Activated naive CD4-positive, alpha-beta T cell treated with anti-CD3 and anti-CD28 coated beads for 36 hours (primary cell): ENCODE measurements at regions of chr5 and their contacts with region 1.

Region 1: DNA sequence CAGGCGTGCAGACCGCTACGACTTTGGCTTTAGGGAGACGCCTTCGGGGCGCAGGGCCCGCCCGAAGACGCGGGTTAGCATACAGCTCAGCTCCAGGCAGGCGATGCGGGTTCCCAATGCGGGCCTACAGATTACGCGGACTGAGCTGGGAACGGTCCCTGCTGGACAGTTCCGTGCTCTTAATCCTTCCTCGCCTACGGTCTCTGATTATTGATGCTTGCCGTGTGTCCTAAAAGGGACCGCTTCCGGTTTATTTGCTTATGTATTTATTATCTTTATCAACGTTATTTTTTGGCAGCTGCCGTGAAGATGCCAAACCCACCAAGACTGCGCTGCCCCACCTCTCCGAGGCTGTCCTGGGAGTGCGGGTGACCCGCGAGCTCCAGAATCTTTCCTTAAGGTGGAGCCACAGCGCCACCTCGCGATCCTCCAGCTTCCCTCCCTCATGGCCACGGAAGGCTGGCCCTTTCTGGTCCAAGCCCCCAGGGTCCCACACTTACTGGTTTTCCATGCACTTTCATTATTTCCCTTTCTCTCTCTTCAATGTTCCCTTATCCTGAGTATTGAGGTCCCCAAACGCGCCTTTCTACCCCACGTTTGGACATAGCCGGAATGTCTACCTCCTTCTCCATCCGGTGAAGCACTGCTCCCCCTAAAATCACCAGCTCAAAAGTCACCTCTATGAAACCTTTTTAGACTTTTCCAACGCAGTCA is 7.0 kb upstream of the EBF1 start:
- DNase-seq: peak; percentile 80
- H3K4me3 Mint-ChIP-seq: peak overlapping the region; percentile 71
- H3K27ac Mint-ChIP-seq: no peak overlapping the region
- H3K4me1 Mint-ChIP-seq: peaks cover 24% of the 10 kb centered on the region
- H3K27me3 Mint-ChIP-seq: peaks cover 45% of the 10 kb centered on the region

Region 2: DNA sequence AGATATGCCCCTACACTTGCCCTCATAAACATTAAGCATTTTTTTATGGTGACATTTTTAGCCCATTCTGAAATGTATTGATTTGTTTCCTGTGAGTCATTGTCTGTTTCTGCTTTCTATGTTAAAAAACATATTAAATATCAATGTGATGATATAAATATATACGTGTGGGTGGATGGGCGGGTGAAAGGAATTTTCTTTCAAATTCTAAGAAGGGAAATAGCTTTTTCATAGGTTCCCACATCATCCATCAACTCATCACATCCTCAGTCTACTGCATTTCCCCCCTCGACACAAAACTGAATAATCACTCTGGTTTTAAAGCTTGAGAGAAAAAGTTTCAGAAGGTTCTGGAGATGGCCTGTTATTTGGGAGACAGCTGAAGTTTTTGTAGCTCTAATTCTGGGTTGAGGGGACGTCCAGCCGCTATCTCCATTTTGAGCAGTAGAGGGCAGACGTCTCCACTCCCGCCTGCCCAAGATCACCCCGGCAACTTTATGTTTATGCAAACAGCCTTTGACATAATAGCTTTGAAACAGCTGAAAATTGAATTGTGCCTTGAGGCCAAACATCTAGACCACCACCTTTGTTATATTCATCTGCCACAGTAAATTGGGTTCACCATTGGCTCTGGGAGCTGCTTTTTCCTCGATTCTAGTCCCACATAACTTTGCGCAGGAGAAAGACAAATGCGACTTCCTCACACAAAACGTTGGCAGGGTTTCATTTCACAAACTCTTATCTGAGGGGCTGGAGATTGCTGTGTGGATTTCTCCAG is 1031.5 kb before region 1 on chr5:
- CTCF ChIA-PET with region 1: interaction called, 9 read pairs
- intact Hi-C with region 1: loop called (anchors 1 kb)
- DNase-seq: peak; percentile 63
- H3K4me3 Mint-ChIP-seq: no peak overlapping the region
- H3K27ac Mint-ChIP-seq: no peak overlapping the region
- H3K4me1 Mint-ChIP-seq: peaks cover 3% of the 10 kb centered on the region
- H3K27me3 Mint-ChIP-seq: peaks cover 2% of the 10 kb centered on the region

Region 3: DNA sequence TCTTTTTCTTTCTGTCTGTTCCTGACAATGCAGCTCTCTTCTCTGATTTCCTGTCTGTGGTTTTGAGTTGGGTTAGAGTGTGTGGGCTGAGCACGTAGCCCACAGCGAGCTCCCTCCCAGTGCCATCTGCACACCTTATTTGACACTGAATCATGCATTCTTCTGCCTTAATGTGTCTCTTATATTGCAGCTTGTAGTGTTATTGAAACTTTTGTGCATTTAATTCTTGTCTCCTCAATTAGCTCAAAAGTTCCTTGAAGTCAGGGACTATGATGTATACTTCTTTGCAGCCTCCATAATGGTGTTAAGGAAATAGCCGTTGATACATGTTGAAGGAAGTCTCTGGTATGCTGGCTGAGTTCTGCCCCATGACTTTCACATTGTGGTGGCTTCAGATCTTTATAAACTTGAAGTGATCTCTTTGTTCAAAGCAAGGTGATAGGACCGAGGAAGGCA is 671.5 kb before region 1 on chr5:
- CTCF ChIA-PET with region 1: no interaction called
- intact Hi-C with region 1: loop called (anchors 10 kb)
- DNase-seq: peak; percentile 50
- H3K4me3 Mint-ChIP-seq: no peak overlapping the region
- H3K27ac Mint-ChIP-seq: peak overlapping the region; percentile 57
- H3K4me1 Mint-ChIP-seq: peaks cover 62% of the 10 kb centered on the region
- H3K27me3 Mint-ChIP-seq: no peaks in the 10 kb centered on the region

Region 4: DNA sequence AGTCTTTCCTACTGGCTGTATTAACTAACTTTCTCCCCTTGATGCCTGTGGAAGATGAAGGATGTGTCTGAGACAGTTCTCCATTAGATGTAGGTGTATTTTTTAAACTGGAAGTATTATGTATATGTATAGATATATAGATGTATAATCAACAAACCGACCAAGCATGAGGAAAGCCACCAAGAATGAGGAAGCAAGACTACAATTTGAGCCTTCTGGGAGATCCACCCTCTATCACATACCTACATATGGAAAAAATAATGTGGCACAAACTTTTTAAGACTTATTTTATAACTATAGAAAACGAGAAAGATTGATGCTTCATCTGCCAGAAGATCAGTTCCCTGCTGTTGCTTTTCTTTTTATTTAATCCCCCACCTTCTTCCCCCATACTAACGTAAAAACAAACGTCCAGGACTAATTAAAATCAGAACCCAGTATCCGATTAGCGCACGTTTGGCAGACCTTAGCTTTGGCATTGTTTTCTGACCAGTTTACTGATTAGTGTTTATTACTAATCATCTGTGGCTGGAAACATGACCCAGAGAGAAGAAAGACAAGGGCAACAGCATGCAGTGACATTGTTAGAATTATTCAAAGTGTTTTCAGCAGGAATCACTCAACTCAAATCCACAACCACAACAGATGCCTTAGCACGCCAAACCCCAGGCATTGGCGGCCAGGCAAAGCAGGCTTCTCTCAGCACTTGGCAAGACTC is 497.2 kb before region 1 on chr5:
- CTCF ChIA-PET with region 1: no interaction called
- intact Hi-C with region 1: no loop called
- DNase-seq: no peak
- H3K4me3 Mint-ChIP-seq: no peak overlapping the region
- H3K27ac Mint-ChIP-seq: no peak overlapping the region
- H3K4me1 Mint-ChIP-seq: no peaks in the 10 kb centered on the region
- H3K27me3 Mint-ChIP-seq: no peaks in the 10 kb centered on the region

Region 5: GRCh38 chr5:158754018-158754514 is 352.7 kb before region 1 on chr5:
- CTCF ChIA-PET with region 1: no interaction called
- intact Hi-C with region 1: no loop called
- DNase-seq: no peak
- H3K4me3 Mint-ChIP-seq: no peak overlapping the region
- H3K27ac Mint-ChIP-seq: no peak overlapping the region
- H3K4me1 Mint-ChIP-seq: peaks cover 4% of the 10 kb centered on the region
- H3K27me3 Mint-ChIP-seq: peaks cover 3% of the 10 kb centered on the region

Region 6: DNA sequence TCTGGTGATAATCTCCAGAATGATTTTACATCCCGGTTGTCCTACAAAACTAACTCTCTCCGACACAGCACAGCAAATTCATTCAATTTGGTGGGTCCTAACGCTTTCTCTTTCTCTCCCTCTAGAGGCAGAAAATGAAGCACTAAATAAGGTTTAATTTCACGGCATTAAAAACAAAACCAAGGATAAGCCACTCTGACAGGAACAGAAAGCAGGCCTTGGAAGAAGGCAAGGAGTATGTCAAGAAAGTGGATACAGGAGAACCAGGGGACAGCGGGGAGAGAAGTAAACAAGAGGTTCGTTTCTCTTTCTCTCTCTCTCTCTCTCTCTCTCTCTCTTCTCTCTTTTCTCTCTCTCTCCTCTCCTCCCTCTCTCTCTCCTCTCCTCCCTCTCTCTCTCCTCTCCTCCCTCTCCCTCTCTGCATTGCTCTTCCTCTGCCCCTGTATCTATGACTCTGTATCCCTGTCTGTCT is 56.8 kb before region 1 on chr5:
- CTCF ChIA-PET with region 1: interaction called, 15 read pairs
- intact Hi-C with region 1: loop called (anchors 5 kb)
- DNase-seq: no peak
- H3K4me3 Mint-ChIP-seq: no peak overlapping the region
- H3K27ac Mint-ChIP-seq: no peak overlapping the region
- H3K4me1 Mint-ChIP-seq: peaks cover 8% of the 10 kb centered on the region
- H3K27me3 Mint-ChIP-seq: peaks cover 56% of the 10 kb centered on the region

Region 7: GRCh38 chr5:159120446-159120845 is 13.7 kb after region 1 on chr5:
- CTCF ChIA-PET with region 1: interaction called, 19 read pairs
- intact Hi-C with region 1: no loop called
- DNase-seq: no peak
- H3K4me3 Mint-ChIP-seq: peak overlapping the region; percentile 51
- H3K27ac Mint-ChIP-seq: peak overlapping the region; percentile 70
- H3K4me1 Mint-ChIP-seq: peaks cover 26% of the 10 kb centered on the region
- H3K27me3 Mint-ChIP-seq: no peaks in the 10 kb centered on the region

Region 8: GRCh38 chr5:159712672-159713071 is 605.9 kb after region 1 on chr5:
- CTCF ChIA-PET with region 1: no interaction called
- intact Hi-C with region 1: no loop called
- DNase-seq: no peak
- H3K4me3 Mint-ChIP-seq: no peak overlapping the region
- H3K27ac Mint-ChIP-seq: no peak overlapping the region
- H3K4me1 Mint-ChIP-seq: no peaks in the 10 kb centered on the region
- H3K27me3 Mint-ChIP-seq: peaks cover 11% of the 10 kb centered on the region

Region 9: GRCh38 chr5:159805021-159805420 is 698.3 kb after region 1 on chr5:
- CTCF ChIA-PET with region 1: no interaction called
- intact Hi-C with region 1: no loop called
- DNase-seq: no peak
- H3K4me3 Mint-ChIP-seq: no peak overlapping the region
- H3K27ac Mint-ChIP-seq: no peak overlapping the region
- H3K4me1 Mint-ChIP-seq: no peaks in the 10 kb centered on the region
- H3K27me3 Mint-ChIP-seq: peaks cover 21% of the 10 kb centered on the region